ENCODE measurements at regions of chr16 and their contacts with region 1.

Region 1: DNA sequence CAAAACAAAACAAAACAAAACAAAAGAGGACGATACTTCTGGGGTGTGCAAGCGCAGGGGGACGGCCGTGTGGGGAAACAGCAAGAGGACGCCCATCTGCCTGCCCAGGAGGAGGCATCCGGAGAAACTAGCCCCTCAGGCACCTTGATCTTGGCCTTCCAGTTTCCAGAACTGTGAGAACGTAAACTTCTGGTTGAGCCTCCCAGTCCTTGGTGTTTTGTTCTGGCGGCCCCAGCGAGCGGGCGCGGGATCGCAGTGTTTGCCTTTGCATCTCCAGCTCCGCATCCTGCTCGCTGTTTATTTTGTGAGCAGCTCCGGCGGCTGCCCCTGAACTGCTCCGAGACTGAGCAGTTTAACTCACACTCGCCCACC is 1.0 kb upstream of the MMP25 start:
- DNase-seq: no peak
- ATAC-seq: peak; percentile 52
- H3K4me3 ChIP-seq: peak overlapping the region; percentile 56 to 79
- H3K27ac ChIP-seq: no peak overlapping the region
- H3K4me1 ChIP-seq: peaks cover 10 to 56% of the 10 kb centered on the region in 2 experiments
- H3K27me3 ChIP-seq: no peaks in the 10 kb centered on the region
- CTCF ChIP-seq: no peak
- POLR2A ChIP-seq: no peak
- RAD21 ChIP-seq: no peak

Region 2: GRCh38 chr16:3059000-3059722 is 13.8 kb after region 1 on chr16:
- CTCF ChIA-PET with region 1: interaction called, 16 read pairs
- POLR2A ChIA-PET with region 1: interaction called, 6 read pairs
- RAD21 ChIA-PET with region 1: no interaction called
- intact Hi-C with region 1: no loop called
- DNase-seq: peak; percentile 60
- ATAC-seq: peak; percentile 86
- H3K4me3 ChIP-seq: peak overlapping the region; percentile 81 to 87
- H3K27ac ChIP-seq: peak overlapping the region; percentile 84
- H3K4me1 ChIP-seq: peaks cover 0 to 22% of the 10 kb centered on the region in 2 experiments; a peak in 3 of 4 replicates
- H3K27me3 ChIP-seq: no peaks in the 10 kb centered on the region
- CTCF ChIP-seq: peak; percentile 58 to 94 (median 66)
- POLR2A ChIP-seq: no peak
- RAD21 ChIP-seq: peak; percentile 89

Region 3: DNA sequence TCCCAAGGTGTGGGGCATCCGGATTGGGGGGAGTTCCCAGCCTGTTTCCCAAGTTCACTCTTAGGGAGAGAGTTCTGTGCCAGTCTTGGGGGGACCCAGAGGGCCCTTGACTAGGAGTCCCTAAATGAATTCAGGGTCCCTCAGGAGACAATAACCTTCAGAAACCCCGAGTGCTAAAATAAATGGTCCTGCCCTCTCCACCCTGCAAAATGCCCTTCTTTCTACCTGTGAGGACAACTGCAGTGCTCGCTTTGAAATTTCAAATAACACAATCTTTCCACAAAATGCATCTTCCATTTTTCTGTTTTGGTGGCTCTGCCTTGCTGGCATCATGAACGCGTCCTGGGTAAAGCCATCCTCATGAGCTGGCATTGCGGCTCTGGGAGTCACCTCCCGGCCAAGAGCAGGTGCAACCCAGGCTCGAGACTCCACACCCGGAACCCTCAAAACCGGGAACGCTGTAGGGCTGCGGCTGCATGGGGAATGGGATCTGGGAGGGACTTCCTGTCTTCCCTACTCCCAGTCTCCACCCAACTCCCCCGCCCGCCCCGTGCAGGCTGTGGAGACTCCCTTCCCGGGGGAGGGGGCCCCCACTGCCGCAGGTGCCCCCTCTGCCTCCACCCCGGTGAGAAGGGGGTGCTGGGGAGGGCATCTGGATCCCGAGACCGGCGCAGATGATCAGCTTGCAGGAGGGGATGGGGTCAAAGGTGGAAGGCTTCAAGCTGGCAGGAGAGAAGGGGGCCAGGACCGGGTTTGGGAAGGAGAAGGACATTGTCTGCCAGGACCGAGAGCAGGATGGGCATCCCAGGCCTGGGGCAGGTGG is 66.9 kb after region 1 on chr16 and contains the start of gene ZNF205:
- CTCF ChIA-PET with region 1: no interaction called
- POLR2A ChIA-PET with region 1: no interaction called
- RAD21 ChIA-PET with region 1: no interaction called
- intact Hi-C with region 1: no loop called
- DNase-seq: no peak
- ATAC-seq: peak; percentile 99
- H3K4me3 ChIP-seq: peak within 1 kb of the TSS; percentile 96 to 99
- H3K27ac ChIP-seq: peak within 1 kb of the TSS; percentile 67
- H3K4me1 ChIP-seq: peaks cover 10 to 29% of the 10 kb centered on the region in 2 experiments
- H3K27me3 ChIP-seq: no peaks in the 10 kb centered on the region
- CTCF ChIP-seq: no peak
- POLR2A ChIP-seq: peak; percentile 25
- RAD21 ChIP-seq: no peak
- total RNA-seq, gene ZNF205: 17.0 TPM

Measured in HCT116 (cell line).